ENCODE measurements at regions of chr17 and their contacts with region 1.

Region 1: DNA sequence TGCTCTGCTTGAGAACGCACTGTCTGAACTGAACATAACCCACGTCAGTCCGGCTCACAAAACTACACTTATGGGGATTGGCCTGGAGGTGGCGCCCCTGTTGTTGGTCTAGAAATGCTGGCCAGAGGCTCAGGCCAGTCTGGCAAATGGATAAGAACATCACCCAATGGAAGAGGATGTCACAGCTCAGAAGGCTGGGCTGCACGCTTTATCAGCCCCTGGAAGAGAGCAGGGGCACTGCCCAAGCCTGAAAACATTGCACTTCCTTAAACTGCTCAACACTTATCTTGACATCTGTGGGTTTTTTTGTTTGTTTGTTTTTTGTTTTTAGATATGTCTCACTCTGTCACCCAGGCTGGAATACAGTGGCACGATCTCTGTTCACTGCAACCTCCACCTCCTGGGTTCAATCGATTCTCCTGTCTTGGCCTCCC is 24.8 kb upstream of the BPTF start:
- DNase-seq: peak; percentile 80
- H3K4me3 ChIP-seq: no peak overlapping the region
- H3K27ac ChIP-seq: no peak overlapping the region
- H3K4me1 ChIP-seq: no peaks in the 10 kb centered on the region
- H3K27me3 ChIP-seq: no peaks in the 10 kb centered on the region
- CTCF ChIP-seq: peak; percentile 51

Region 2: GRCh38 chr17:67862614-67863217 is 62.2 kb after region 1 on chr17:
- intact Hi-C with region 1: loop called (anchors 10 kb)
- DNase-seq: no peak
- H3K4me3 ChIP-seq: no peak overlapping the region
- H3K27ac ChIP-seq: no peak overlapping the region
- H3K4me1 ChIP-seq: no peaks in the 10 kb centered on the region
- H3K27me3 ChIP-seq: no peaks in the 10 kb centered on the region
- CTCF ChIP-seq: no peak

Measured in colonic mucosa (tissue), 4 donors.